Activated CD4-positive, alpha-beta T cell treated with anti-CD3 and anti-CD28 coated beads for 36 hours (primary cell): ENCODE measurements at regions of chr14 and their contacts with region 1.

Region 1: GRCh38 chr14:54566410-54567223 is at the start of gene SAMD4A:
- DNase-seq: peak; percentile 75
- ATAC-seq: peak; percentile 20
- H3K4me3 Mint-ChIP-seq: peak within 1 kb of the TSS; percentile 85
- H3K27ac Mint-ChIP-seq: peak within 1 kb of the TSS; percentile 89
- H3K4me1 Mint-ChIP-seq: peaks cover 25% of the 10 kb centered on the region
- H3K27me3 Mint-ChIP-seq: peaks cover 15% of the 10 kb centered on the region
- total RNA-seq, gene SAMD4A: 2.7 to 2.8 TPM

Region 2: DNA sequence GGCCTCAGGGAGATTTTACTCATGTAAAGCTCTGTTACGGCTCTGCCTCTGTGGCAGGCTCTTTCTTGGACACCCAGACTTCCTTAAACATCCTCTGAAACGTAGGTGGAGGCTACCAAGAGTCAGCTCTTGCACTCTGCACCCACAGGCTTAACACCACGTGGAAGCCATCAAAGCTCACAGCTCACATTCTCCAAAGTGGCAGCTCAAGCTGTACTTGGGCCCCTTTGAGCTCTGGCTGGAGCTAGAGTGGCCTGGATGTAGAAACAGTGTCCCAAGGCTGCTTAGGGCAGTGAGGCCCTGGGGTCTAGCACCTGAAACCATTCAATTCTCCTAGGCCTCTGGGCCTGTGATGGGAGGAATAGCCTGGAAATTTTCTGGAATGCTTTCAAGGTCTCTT is 325.1 kb before region 1 on chr14:
- CTCF ChIA-PET with region 1: no interaction called
- POLR2A ChIA-PET with region 1: no interaction called
- intact Hi-C with region 1: no loop called
- DNase-seq: no peak
- ATAC-seq: no peak
- H3K4me3 Mint-ChIP-seq: no peak overlapping the region
- H3K27ac Mint-ChIP-seq: no peak overlapping the region
- H3K4me1 Mint-ChIP-seq: no peaks in the 10 kb centered on the region
- H3K27me3 Mint-ChIP-seq: no peaks in the 10 kb centered on the region

Region 3: DNA sequence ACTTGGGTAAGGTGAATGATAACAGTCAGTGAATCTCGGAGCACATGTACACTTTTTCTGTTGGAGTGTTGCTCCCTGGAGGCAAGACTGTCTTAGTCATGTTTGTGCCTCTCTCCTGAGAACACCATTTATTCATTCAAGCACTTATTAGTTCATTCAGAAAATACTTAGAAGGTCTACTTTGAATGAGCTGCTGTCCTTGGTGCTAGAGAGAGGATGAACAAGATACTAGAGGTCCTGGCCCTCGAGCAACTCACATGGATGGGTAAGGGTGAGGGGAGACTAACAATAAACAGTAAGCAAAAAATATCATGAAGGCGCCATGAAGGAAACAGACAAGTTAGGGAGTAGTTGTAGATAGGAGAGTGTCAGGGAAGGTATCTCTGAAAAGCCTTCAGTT is 16.8 kb before region 1 on chr14:
- CTCF ChIA-PET with region 1: interaction called, 10 read pairs
- POLR2A ChIA-PET with region 1: no interaction called
- intact Hi-C with region 1: no loop called
- DNase-seq: no peak
- ATAC-seq: no peak
- H3K4me3 Mint-ChIP-seq: no peak overlapping the region
- H3K27ac Mint-ChIP-seq: no peak overlapping the region
- H3K4me1 Mint-ChIP-seq: no peaks in the 10 kb centered on the region
- H3K27me3 Mint-ChIP-seq: peaks cover 5% of the 10 kb centered on the region

Region 4: DNA sequence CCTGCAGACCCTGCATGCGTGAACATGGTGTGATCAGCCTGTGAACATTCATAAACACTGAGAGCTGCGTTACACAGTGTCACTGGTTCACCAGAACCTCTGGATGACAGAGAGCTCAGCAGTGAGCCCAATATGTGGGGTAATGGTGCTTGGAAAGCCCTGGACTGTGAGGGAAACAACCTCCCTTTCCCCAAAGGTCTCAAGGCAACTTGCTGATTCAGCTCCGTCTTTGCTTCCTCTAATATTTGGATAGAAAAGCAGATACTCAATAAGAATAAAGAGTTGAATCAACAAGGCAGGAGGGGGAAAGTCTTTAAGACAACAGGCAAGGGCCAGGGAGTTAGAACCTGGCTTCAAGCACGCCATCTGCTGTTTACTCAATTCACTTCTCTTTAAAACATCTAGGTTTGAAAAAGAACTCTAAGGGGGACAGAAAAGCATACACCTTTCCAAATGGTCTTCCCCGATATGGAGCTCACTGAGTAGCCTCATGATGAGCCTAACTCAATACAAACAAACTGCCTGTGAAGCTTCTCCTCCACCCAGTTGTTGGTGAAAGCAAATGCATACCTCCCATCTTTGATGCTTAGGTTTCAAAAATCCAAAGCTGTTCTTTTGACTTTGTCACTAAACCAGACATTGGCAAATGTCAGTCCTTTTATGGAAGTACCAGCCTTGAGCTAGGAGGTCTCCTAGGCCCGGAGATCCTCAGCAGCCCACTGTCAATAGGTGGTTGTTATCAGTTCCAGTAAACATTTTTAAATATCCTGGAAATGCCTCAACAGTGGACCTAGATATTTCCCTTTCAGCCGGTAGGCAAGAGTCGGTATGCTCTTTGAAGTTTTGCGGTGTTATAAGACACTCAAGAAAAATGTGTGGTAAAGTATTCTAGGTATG is 76.4 kb after region 1 on chr14:
- CTCF ChIA-PET with region 1: interaction called, 5 read pairs
- POLR2A ChIA-PET with region 1: no interaction called
- intact Hi-C with region 1: loop called (anchors 1 to 5 kb)
- DNase-seq: peak; percentile 22
- ATAC-seq: no peak
- H3K4me3 Mint-ChIP-seq: no peak overlapping the region
- H3K27ac Mint-ChIP-seq: no peak overlapping the region
- H3K4me1 Mint-ChIP-seq: peaks cover 12% of the 10 kb centered on the region
- H3K27me3 Mint-ChIP-seq: no peaks in the 10 kb centered on the region

Region 5: GRCh38 chr14:54794796-54795195 is 228.2 kb after region 1 on chr14:
- CTCF ChIA-PET with region 1: interaction called, 21 read pairs
- POLR2A ChIA-PET with region 1: no interaction called
- intact Hi-C with region 1: no loop called
- DNase-seq: no peak
- ATAC-seq: no peak
- H3K4me3 Mint-ChIP-seq: no peak overlapping the region
- H3K27ac Mint-ChIP-seq: no peak overlapping the region
- H3K4me1 Mint-ChIP-seq: no peaks in the 10 kb centered on the region
- H3K27me3 Mint-ChIP-seq: peaks cover 6% of the 10 kb centered on the region

Region 6: DNA sequence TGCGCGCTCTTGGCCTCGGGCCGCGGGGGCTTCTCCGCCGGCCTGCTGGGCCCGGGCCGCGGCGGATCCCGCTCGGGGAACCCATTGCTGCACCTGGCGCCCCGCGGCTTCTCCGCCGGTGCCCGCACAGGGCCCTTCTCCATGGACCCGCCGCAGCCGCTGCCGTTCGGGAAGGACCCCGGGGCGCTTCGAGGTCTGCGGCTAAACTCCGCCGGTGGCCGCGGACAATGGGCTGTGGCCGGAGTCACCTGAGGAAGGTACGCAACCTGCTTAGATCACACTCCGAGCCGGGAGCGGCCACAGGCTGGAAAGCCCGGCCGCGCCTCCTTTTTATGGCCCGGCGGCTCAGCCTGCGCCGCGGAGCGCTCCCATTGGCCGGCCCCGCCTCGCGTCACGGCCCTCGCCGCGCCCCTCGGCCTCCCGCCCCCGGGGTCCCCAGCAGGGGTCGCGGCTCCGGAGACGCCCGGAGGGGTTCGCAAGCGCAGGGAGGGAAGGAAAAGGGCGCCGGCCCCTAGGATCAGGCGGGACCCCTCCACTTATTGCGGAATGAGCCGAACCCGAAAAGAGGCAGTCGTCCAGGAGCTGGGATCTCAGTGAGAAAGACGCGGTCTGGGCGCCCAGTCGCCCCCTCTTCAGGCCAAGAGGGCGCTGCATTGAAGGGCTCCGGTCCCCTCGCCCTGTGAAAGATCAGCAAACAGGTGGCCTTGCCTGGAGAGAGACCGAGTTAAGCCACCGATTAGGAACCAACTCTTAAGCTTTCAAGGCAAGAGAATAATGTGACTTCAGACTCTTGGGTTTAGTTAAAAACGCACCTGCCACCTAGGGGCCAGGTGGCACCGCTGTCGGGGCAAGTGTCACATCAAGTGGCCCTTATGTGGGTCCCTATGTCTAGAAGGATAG is 336.2 kb after region 1 on chr14 and contains the start of gene GCH1:
- CTCF ChIA-PET with region 1: no interaction called
- POLR2A ChIA-PET with region 1: no interaction called
- intact Hi-C with region 1: loop called (anchors 1 to 2 kb)
- DNase-seq: peak; percentile 81
- ATAC-seq: peak; percentile 80
- H3K4me3 Mint-ChIP-seq: peak within 1 kb of the TSS; percentile 88
- H3K27ac Mint-ChIP-seq: peak within 1 kb of the TSS; percentile 90
- H3K4me1 Mint-ChIP-seq: peaks cover 26% of the 10 kb centered on the region
- H3K27me3 Mint-ChIP-seq: no peaks in the 10 kb centered on the region
- total RNA-seq, gene GCH1: 28.1 to 36.4 TPM